GM12878 (cell line): ENCODE measurements at regions of chr12 and their contacts with region 1.

Region 1: DNA sequence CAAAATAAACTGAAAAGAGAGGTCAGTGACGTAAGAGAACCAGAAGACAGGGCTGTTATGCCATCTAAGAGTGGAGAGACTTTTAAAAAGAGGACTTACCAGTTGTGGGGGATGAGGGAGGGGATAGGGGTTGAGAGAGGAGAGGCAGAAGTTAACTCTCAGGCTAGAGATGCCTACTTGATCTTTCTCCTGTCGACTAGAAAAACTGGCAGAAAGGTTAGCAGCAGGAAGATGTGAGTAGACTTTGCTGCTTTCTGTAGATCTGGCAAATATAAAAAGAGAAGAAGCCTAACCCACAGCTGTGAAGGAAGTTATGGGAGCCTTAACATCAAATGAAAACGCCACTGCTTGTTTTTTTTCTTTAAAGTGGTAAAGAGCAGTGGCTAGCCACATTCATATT is 10.7 kb downstream of the CREBL2 start:
- DNase-seq: no peak
- ATAC-seq: peak; percentile 29; the same call in 2 of the 3 replicates
- H3K4me3 ChIP-seq: no peak overlapping the region
- H3K27ac ChIP-seq: no peak overlapping the region
- H3K4me1 ChIP-seq: no peaks in the 10 kb centered on the region
- H3K27me3 ChIP-seq: no peaks in the 10 kb centered on the region
- CTCF ChIP-seq: no peak
- EP300 ChIP-seq: no peak
- POLR2A ChIP-seq: no peak
- RAD21 ChIP-seq: no peak

Region 2: DNA sequence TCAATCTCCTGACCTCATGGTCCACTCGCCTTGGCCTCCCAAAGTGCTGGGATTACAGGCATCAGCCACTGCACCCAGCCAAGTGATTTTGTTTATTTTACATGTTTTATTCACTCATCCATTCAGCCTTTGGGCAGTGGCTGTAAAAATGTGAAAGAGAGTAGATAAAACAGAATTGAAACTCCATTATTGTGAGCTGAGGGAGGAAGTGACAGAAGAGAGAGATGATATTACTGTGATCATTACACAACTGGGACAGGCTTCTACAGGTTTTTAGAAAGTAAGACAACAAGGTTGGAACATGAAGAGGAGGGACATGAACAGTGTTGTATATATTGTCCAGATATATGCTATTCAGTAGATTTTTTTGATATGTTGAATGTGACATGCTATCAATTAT is 14.2 kb after region 1 on chr12:
- CTCF ChIA-PET with region 1: interaction called, 31 read pairs
- POLR2A ChIA-PET with region 1: interaction called, 4 read pairs
- RAD21 ChIA-PET with region 1: no interaction called
- SMC1A ChIA-PET with region 1: interaction called, 28 read pairs
- in situ Hi-C with region 1: no loop called
- intact Hi-C with region 1: no loop called
- DNase-seq: no peak
- ATAC-seq: peak; percentile 98
- H3K4me3 ChIP-seq: no peak overlapping the region
- H3K27ac ChIP-seq: peak overlapping the region; percentile 79
- H3K4me1 ChIP-seq: peaks cover 7% of the 10 kb centered on the region; the same call in 1 of the 2 replicates
- H3K27me3 ChIP-seq: no peaks in the 10 kb centered on the region
- CTCF ChIP-seq: no peak
- EP300 ChIP-seq: 0 out of 4 replicates have a peak, but pooled peaks of 1 of the 2 experiments have one; percentile 37
- POLR2A ChIP-seq: no peak
- RAD21 ChIP-seq: no peak

Region 3: GRCh38 chr12:12684375-12685106 is 62.1 kb after region 1 on chr12:
- CTCF ChIA-PET with region 1: no interaction called
- POLR2A ChIA-PET with region 1: no interaction called
- RAD21 ChIA-PET with region 1: no interaction called
- SMC1A ChIA-PET with region 1: no interaction called
- in situ Hi-C with region 1: no loop called
- intact Hi-C with region 1: no loop called
- DNase-seq: no peak
- ATAC-seq: peak; percentile 46; the same call in 2 of the 3 replicates
- H3K4me3 ChIP-seq: no peak overlapping the region
- H3K27ac ChIP-seq: no peak overlapping the region
- H3K4me1 ChIP-seq: peaks cover 7% of the 10 kb centered on the region
- H3K27me3 ChIP-seq: no peaks in the 10 kb centered on the region
- CTCF ChIP-seq: no peak
- EP300 ChIP-seq: no peak
- POLR2A ChIP-seq: no peak
- RAD21 ChIP-seq: no peak

Region 4: GRCh38 chr12:12724661-12725545 is 102.5 kb after region 1 on chr12:
- CTCF ChIA-PET with region 1: no interaction called
- POLR2A ChIA-PET with region 1: no interaction called
- RAD21 ChIA-PET with region 1: no interaction called
- SMC1A ChIA-PET with region 1: no interaction called
- in situ Hi-C with region 1: no loop called
- intact Hi-C with region 1: no loop called
- DNase-seq: peak; percentile 94
- ATAC-seq: peak; percentile 55
- H3K4me3 ChIP-seq: peak overlapping the region; percentile 97
- H3K27ac ChIP-seq: peak overlapping the region; percentile 97
- H3K4me1 ChIP-seq: peaks cover 14% of the 10 kb centered on the region
- H3K27me3 ChIP-seq: no peaks in the 10 kb centered on the region
- CTCF ChIP-seq: no peak
- EP300 ChIP-seq: no peak
- POLR2A ChIP-seq: peak; percentile 76
- RAD21 ChIP-seq: no peak